CD4-positive, alpha-beta T cell (primary cell): ENCODE measurements at regions of chrX and their contacts with region 1.

Region 1: DNA sequence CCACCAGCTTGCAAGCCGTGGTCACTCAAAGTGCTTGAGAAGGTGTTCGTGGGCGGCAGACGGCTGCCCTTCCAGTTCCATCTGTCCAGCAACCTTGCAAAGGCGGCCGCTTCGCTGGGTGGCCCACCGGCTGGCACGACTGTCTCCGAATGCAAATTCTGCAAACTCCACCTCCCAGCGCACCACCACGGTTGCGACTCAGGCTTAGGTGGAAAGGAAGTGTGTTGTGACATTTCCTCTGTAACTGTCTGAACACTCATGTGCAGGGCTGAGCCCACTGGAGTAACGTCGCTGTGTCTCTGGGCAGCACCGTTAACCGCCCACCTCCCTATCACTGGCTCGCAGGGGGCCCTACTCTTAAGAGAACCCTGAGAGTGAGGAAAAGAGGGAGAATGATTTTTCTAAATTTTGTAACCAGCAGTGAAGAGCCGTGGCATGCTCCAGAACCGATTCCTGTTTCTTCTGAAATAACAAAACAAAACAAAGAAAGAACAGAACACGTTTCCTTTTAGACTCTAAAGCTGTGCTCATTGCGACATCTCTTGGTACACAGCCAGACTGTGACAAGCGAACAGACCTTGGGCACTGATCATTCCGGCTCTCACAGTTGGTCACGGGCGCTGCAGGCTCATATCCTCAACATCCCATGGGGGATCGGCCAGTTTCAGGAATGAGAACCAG is at the start of gene P2RY8:
- DNase-seq: peak; percentile 66 to 89 (median 76)
- ATAC-seq: peak; percentile 77
- H3K4me3 ChIP-seq: peak within 1 kb of the TSS; percentile 97
- H3K4me3 Mint-ChIP-seq: peak within 1 kb of the TSS; percentile 98
- H3K27ac ChIP-seq: peak within 1 kb of the TSS; percentile 82 to 88
- H3K27ac Mint-ChIP-seq: peak within 1 kb of the TSS; percentile 98
- H3K4me1 ChIP-seq: peaks cover 32% of the 10 kb centered on the region
- H3K4me1 Mint-ChIP-seq: peaks cover 26% of the 10 kb centered on the region
- H3K27me3 ChIP-seq: no peaks in the 10 kb centered on the region
- H3K27me3 Mint-ChIP-seq: no peaks in the 10 kb centered on the region
- CTCF ChIP-seq: peak; percentile 19
- total RNA-seq, gene P2RY8: 139 TPM

Region 2: DNA sequence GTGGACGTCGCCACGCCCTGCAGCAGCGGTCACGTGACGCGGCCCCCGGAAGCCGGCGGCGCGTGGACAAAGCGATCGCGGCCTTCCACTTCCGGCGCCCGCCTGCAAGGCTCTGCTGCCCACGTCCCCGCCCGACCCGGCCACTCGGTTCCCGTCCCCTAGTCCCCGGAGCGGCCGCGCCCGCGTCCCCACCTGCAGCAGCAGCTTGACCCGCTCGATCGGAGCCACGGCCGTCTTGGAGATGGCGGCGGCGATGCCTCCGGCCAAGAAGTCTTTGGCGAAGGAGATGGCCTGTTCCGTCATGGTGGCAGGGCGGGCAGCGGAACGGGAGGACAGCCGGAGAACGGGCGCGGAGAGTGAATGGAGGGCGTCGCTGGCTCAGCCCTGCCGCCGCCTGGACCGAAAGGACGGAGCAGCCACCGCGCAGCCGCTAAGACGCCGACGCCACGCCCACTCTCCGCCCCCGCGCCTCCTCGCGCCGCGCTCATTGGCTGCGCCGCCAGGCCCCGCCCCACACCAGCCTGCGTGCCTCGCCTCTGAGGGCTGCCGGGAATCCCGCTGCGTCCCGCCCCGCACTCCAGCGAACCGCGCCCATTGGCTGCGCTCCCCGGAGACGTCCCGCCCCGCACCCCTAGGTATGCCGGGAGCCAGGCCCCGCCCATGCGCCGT is 145.3 kb before region 1 on chrX and contains the start of gene SLC25A6:
- CTCF ChIA-PET with region 1: no interaction called
- POLR2A ChIA-PET with region 1: no interaction called
- intact Hi-C with region 1: loop called (anchors 2 to 5 kb)
- DNase-seq: peak; percentile 98 to 100 (median 99)
- ATAC-seq: peak; percentile 95
- H3K4me3 ChIP-seq: peak within 1 kb of the TSS; percentile 84
- H3K4me3 Mint-ChIP-seq: peak within 1 kb of the TSS; percentile 92
- H3K27ac ChIP-seq: peak within 1 kb of the TSS; percentile 87 to 98
- H3K27ac Mint-ChIP-seq: peak within 1 kb of the TSS; percentile 85
- H3K4me1 ChIP-seq: peaks cover 48% of the 10 kb centered on the region
- H3K4me1 Mint-ChIP-seq: peaks cover 42% of the 10 kb centered on the region
- H3K27me3 ChIP-seq: peaks cover 0 to 2% of the 10 kb centered on the region in 2 experiments
- H3K27me3 Mint-ChIP-seq: no peaks in the 10 kb centered on the region
- CTCF ChIP-seq: peak; percentile 28
- total RNA-seq, gene SLC25A6: 338 to 340 TPM

Region 3: DNA sequence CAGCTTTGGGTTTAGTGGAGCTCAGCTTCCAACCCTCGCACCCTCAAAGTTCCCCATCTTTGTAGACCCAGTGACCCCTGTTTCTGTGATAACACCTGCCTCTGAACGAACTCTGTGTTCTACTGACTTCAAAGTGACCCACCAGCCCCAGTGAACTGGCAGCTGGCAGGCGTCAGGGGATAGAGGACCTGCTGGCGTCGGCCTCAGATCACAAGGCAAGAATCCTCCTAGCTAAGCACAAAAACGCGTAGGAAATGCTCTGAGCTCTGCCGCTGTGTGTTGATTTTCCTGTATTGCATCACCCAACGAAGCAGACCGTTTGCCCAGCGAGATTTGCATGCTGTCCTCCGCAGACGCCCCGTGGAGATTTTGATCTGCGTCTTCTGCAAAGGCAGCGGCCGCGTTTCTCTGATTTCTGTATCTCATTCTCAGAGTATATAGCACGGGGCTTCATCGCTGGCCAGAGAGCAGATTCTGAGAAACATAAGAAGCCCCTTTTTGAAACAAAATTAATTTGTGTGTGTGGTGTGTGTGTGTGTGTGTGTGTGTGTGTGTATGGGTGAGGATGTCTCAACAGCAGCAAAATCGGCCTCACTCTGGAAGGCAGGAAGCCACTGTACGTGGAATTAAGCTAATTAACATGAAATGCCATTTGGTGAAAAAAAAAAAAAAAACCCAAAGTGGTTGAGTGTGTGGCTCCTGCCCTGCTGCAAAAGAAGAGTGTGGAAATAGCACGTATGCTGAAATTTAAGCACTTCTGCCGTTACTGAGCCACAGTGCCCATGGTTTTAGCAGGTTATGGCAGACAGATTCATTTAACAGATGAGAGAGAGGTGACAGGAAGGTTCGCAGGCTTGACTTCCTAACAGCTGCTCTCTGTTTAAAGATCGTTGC is 55.3 kb before region 1 on chrX:
- CTCF ChIA-PET with region 1: no interaction called
- POLR2A ChIA-PET with region 1: no interaction called
- intact Hi-C with region 1: loop called in 1 of 2 experiments (anchors 5 kb)
- DNase-seq: peak; percentile 49 to 92 (median 70)
- ATAC-seq: peak; percentile 84
- H3K4me3 ChIP-seq: peak overlapping the region; percentile 27
- H3K4me3 Mint-ChIP-seq: peak overlapping the region; percentile 73
- H3K27ac ChIP-seq: peak overlapping the region; percentile 59 to 76
- H3K27ac Mint-ChIP-seq: peak overlapping the region; percentile 95
- H3K4me1 ChIP-seq: peaks cover 58% of the 10 kb centered on the region
- H3K4me1 Mint-ChIP-seq: peaks cover 64% of the 10 kb centered on the region
- H3K27me3 ChIP-seq: no peaks in the 10 kb centered on the region
- H3K27me3 Mint-ChIP-seq: no peaks in the 10 kb centered on the region
- CTCF ChIP-seq: no peak

Region 4: DNA sequence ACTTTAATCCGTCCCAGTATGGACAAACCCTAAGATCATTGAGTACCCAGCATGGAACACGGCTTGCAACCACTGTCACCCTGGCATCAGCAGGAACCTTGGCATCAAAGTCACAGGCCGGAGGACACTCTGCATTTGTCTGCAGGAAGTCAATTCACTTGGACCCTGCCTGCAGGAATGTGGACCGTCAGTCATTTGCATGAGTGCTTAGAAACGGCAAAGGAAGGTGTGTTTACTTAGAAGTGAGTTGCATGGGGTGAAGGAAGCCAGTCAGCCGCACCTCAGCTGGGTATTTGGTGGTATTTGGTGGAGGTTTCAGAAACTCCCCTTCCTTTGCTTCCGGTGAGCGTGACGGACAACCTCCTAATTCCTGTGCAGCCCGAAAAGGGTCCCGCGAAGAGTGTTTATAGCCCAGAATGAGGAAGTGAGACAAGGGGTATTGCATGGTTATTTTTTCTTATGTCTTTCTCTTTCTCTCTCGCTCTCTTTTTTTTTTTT is 15.7 kb before region 1 on chrX:
- CTCF ChIA-PET with region 1: no interaction called
- POLR2A ChIA-PET with region 1: no interaction called
- intact Hi-C with region 1: loop called in 1 of 2 experiments (anchors 2 kb)
- DNase-seq: peak in 13 of 14 experiments; percentile 35 to 90 (median 54)
- ATAC-seq: peak; percentile 68
- H3K4me3 ChIP-seq: peak overlapping the region; percentile 1
- H3K4me3 Mint-ChIP-seq: peak overlapping the region; percentile 84
- H3K27ac ChIP-seq: peak overlapping the region; percentile 32 to 33
- H3K27ac Mint-ChIP-seq: peak overlapping the region; percentile 83
- H3K4me1 ChIP-seq: peaks cover 54% of the 10 kb centered on the region
- H3K4me1 Mint-ChIP-seq: peaks cover 57% of the 10 kb centered on the region
- H3K27me3 ChIP-seq: no peaks in the 10 kb centered on the region
- H3K27me3 Mint-ChIP-seq: no peaks in the 10 kb centered on the region
- CTCF ChIP-seq: no peak

Region 5: GRCh38 chrX:1580735-1581531 is 43.8 kb after region 1 on chrX:
- CTCF ChIA-PET with region 1: no interaction called
- POLR2A ChIA-PET with region 1: no interaction called
- intact Hi-C with region 1: loop called (anchors 2 kb)
- DNase-seq: peak; percentile 44 to 86 (median 65)
- ATAC-seq: peak; percentile 83
- H3K4me3 ChIP-seq: no peak overlapping the region
- H3K4me3 Mint-ChIP-seq: peak overlapping the region; percentile 66
- H3K27ac ChIP-seq: no peak overlapping the region
- H3K27ac Mint-ChIP-seq: peak overlapping the region; percentile 74
- H3K4me1 ChIP-seq: peaks cover 55% of the 10 kb centered on the region
- H3K4me1 Mint-ChIP-seq: peaks cover 19% of the 10 kb centered on the region
- H3K27me3 ChIP-seq: no peaks in the 10 kb centered on the region
- H3K27me3 Mint-ChIP-seq: no peaks in the 10 kb centered on the region
- CTCF ChIP-seq: peak; percentile 72

Region 6: GRCh38 chrX:2690856-2691542 is 1153.8 kb after region 1 on chrX and contains the start of gene CD99:
- CTCF ChIA-PET with region 1: no interaction called
- POLR2A ChIA-PET with region 1: no interaction called
- intact Hi-C with region 1: loop called in 1 of 2 experiments (anchors 10 kb)
- DNase-seq: peak; percentile 79 to 96 (median 89)
- ATAC-seq: peak; percentile 85
- H3K4me3 ChIP-seq: peak within 1 kb of the TSS; percentile 96
- H3K4me3 Mint-ChIP-seq: peak within 1 kb of the TSS; percentile 95
- H3K27ac ChIP-seq: peak within 1 kb of the TSS; percentile 61 to 62
- H3K27ac Mint-ChIP-seq: peak within 1 kb of the TSS; percentile 83
- H3K4me1 ChIP-seq: peaks cover 47% of the 10 kb centered on the region
- H3K4me1 Mint-ChIP-seq: peaks cover 40% of the 10 kb centered on the region
- H3K27me3 ChIP-seq: no peaks in the 10 kb centered on the region
- H3K27me3 Mint-ChIP-seq: no peaks in the 10 kb centered on the region
- CTCF ChIP-seq: no peak
- total RNA-seq, gene CD99: 170 to 184 TPM